Naive thymus-derived CD4-positive, alpha-beta T cell (primary cell): ENCODE measurements at regions of chr3 and their contacts with region 1.

Region 1: DNA sequence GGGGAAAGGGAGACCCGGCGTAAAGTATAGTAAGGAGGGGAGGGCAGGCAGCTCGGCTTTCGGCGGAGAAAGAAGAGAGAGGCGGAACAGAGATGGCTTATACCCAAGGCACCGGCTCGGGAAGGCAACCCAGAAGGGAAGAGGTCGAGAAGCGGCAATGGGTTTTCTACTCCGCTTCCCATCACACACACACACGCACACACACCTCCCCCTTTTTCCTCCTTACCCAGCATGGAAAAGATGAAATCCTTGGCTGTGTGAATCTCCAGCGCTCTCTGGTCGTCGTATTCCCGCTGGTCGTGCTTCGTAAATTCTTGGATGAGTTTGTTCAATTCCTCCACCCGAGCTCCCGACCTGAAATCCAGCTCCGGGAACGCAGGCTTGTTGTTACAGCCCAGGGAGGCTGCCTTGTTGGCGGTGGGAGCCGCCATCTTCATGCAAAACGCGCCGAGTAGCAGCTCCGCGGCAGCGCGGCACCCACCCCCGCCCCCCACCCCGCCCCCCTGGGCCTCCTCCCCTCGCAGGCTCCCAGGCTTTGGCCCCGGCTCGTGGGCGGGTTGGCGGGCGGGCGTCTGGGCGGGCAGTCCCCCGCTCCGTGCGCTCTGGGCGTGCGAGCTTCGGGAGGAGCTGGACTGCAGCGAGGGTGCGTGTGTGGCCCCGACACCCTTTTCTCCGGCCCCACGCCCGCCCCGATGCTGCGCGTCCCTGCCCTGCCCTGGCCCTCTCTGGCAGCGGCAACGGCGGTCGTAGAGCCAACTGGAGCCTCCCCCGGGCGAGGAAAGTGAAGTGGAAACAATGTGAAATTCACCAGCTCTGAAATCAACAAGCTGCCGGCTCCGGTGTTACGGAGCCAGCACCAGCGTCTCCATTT is at the start of gene MB21D2:
- DNase-seq: peak; percentile 18 to 74 (median 45)
- ATAC-seq: peak; percentile 76
- H3K4me3 ChIP-seq: peak within 1 kb of the TSS; percentile 88
- H3K4me3 Mint-ChIP-seq: peak within 1 kb of the TSS; percentile 88 to 99 (median 92)
- H3K27ac ChIP-seq: peak within 1 kb of the TSS; percentile 72
- H3K27ac Mint-ChIP-seq: peak within 1 kb of the TSS; percentile 80 to 96 (median 90)
- H3K4me1 ChIP-seq: peaks cover 0 to 11% of the 10 kb centered on the region in 2 donors
- H3K4me1 Mint-ChIP-seq: peaks cover 6 to 56% (median 42%) of the 10 kb centered on the region in 7 donors
- H3K27me3 ChIP-seq: no peaks in the 10 kb centered on the region
- H3K27me3 Mint-ChIP-seq: peaks cover 43 to 70% (median 58%) of the 10 kb centered on the region in 5 donors
- total RNA-seq, gene MB21D2: 1.7 to 21.5 (median 3.3) TPM

Region 2: DNA sequence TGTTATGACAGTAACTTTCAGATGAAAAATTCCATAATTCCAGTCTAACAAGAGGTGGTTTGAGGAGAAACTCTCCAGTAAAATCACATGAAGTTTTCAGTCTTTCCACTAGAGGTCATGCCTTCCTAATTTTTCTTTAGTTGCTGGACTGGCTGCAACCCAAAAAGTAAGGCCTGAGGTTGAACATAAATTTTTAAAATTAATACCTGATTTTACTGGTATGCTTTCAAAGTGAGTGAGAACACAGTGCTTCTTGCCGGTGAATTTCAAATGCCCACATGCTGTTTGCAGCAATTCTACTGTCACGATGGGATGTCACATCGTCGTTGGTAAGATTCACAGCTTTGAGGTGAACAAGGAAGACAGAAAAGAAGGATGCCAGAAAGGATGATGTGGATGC is 101.3 kb before region 1 on chr3:
- CTCF ChIA-PET with region 1: no interaction called
- POLR2A ChIA-PET with region 1: no interaction called
- intact Hi-C with region 1: loop called (anchors 1 kb)
- DNase-seq: peak in 5 of 9 donors; percentile 13 to 38 (median 24)
- ATAC-seq: no peak
- H3K4me3 ChIP-seq: no peak overlapping the region
- H3K4me3 Mint-ChIP-seq: no peak overlapping the region
- H3K27ac ChIP-seq: no peak overlapping the region
- H3K27ac Mint-ChIP-seq: peak overlapping the region in 1 of 9 donors; percentile 9
- H3K4me1 ChIP-seq: no peaks in the 10 kb centered on the region
- H3K4me1 Mint-ChIP-seq: peaks cover 0 to 67% (median 4%) of the 10 kb centered on the region in 7 donors
- H3K27me3 ChIP-seq: no peaks in the 10 kb centered on the region
- H3K27me3 Mint-ChIP-seq: peaks cover 0 to 2% (median 0%) of the 10 kb centered on the region in 5 donors

Region 3: GRCh38 chr3:192864941-192865340 is 52.7 kb before region 1 on chr3:
- CTCF ChIA-PET with region 1: interaction called, 3 read pairs
- POLR2A ChIA-PET with region 1: no interaction called
- intact Hi-C with region 1: loop called in 1 of 2 experiments (anchors 10 kb)
- DNase-seq: no peak
- ATAC-seq: no peak
- H3K4me3 ChIP-seq: no peak overlapping the region
- H3K4me3 Mint-ChIP-seq: peak overlapping the region in 1 of 10 donors; percentile 22
- H3K27ac ChIP-seq: no peak overlapping the region
- H3K27ac Mint-ChIP-seq: peak overlapping the region in 5 of 9 donors; percentile 21 to 34 (median 23)
- H3K4me1 ChIP-seq: peaks cover 0 to 4% of the 10 kb centered on the region in 2 donors
- H3K4me1 Mint-ChIP-seq: peaks cover 3 to 57% (median 16%) of the 10 kb centered on the region in 7 donors
- H3K27me3 ChIP-seq: no peaks in the 10 kb centered on the region
- H3K27me3 Mint-ChIP-seq: peaks cover 0 to 3% (median 0%) of the 10 kb centered on the region in 5 donors

Region 4: GRCh38 chr3:192892981-192893700 is 24.5 kb before region 1 on chr3:
- CTCF ChIA-PET with region 1: no interaction called
- POLR2A ChIA-PET with region 1: interaction called, 14 read pairs
- intact Hi-C with region 1: loop called (anchors 1 kb)
- DNase-seq: peak in 8 of 9 donors; percentile 20 to 68 (median 41)
- ATAC-seq: peak; percentile 89
- H3K4me3 ChIP-seq: peak overlapping the region; percentile 29
- H3K4me3 Mint-ChIP-seq: peak overlapping the region; percentile 39 to 87 (median 74)
- H3K27ac ChIP-seq: peak overlapping the region; percentile 73
- H3K27ac Mint-ChIP-seq: peak overlapping the region; percentile 77 to 95 (median 91)
- H3K4me1 ChIP-seq: peaks cover 4 to 21% of the 10 kb centered on the region in 2 donors
- H3K4me1 Mint-ChIP-seq: peaks cover 15 to 91% (median 46%) of the 10 kb centered on the region in 7 donors
- H3K27me3 ChIP-seq: no peaks in the 10 kb centered on the region
- H3K27me3 Mint-ChIP-seq: peaks cover 0 to 20% (median 3%) of the 10 kb centered on the region in 5 donors

Region 5: DNA sequence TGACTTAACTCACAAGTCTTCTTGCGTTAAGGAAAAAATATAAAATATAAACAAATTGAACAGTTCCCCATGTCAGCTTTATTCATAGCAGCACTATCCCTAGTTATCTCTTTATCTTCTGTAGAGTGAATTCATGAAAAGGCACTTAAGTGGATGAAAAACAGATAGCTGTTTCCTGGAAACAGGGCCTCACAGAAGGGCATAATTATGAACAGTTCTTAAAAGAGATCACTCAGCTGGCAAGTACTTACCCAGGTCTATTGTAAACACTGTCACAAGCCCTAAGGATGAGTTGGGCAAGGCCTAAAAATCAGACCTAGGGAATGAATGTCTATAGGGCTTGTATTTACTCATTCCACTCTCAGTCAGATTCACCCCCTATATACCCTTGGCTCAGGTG is 10.7 kb before region 1 on chr3:
- CTCF ChIA-PET with region 1: no interaction called
- POLR2A ChIA-PET with region 1: no interaction called
- intact Hi-C with region 1: loop called in 1 of 2 experiments (anchors 1 kb)
- DNase-seq: no peak
- ATAC-seq: no peak
- H3K4me3 ChIP-seq: no peak overlapping the region
- H3K4me3 Mint-ChIP-seq: peak overlapping the region in 3 of 10 donors; percentile 24 to 58 (median 37)
- H3K27ac ChIP-seq: no peak overlapping the region
- H3K27ac Mint-ChIP-seq: peak overlapping the region; percentile 19 to 73 (median 48)
- H3K4me1 ChIP-seq: peaks cover 0 to 9% of the 10 kb centered on the region in 2 donors
- H3K4me1 Mint-ChIP-seq: peaks cover 6 to 54% (median 25%) of the 10 kb centered on the region in 7 donors
- H3K27me3 ChIP-seq: no peaks in the 10 kb centered on the region
- H3K27me3 Mint-ChIP-seq: peaks cover 0 to 5% (median 0%) of the 10 kb centered on the region in 5 donors

Region 6: GRCh38 chr3:193592944-193593667 is 675.5 kb after region 1 on chr3 and contains the start of gene OPA1:
- CTCF ChIA-PET with region 1: no interaction called
- POLR2A ChIA-PET with region 1: no interaction called
- intact Hi-C with region 1: loop called (anchors 10 kb)
- DNase-seq: peak; percentile 73 to 91 (median 80)
- ATAC-seq: peak; percentile 96
- H3K4me3 ChIP-seq: peak within 1 kb of the TSS; percentile 78
- H3K4me3 Mint-ChIP-seq: peak within 1 kb of the TSS; percentile 93 to 98 (median 96)
- H3K27ac ChIP-seq: peak within 1 kb of the TSS; percentile 82
- H3K27ac Mint-ChIP-seq: peak within 1 kb of the TSS; percentile 92 to 98 (median 95)
- H3K4me1 ChIP-seq: peaks cover 18 to 20% of the 10 kb centered on the region in 2 donors
- H3K4me1 Mint-ChIP-seq: peaks cover 40 to 70% (median 59%) of the 10 kb centered on the region in 7 donors
- H3K27me3 ChIP-seq: no peaks in the 10 kb centered on the region
- H3K27me3 Mint-ChIP-seq: no peaks in the 10 kb centered on the region
- total RNA-seq, gene OPA1: 50.7 to 70.0 (median 59.4) TPM